GM23248 (cell line): ENCODE measurements at regions of chr3 and their contacts with region 1.

Region 1: DNA sequence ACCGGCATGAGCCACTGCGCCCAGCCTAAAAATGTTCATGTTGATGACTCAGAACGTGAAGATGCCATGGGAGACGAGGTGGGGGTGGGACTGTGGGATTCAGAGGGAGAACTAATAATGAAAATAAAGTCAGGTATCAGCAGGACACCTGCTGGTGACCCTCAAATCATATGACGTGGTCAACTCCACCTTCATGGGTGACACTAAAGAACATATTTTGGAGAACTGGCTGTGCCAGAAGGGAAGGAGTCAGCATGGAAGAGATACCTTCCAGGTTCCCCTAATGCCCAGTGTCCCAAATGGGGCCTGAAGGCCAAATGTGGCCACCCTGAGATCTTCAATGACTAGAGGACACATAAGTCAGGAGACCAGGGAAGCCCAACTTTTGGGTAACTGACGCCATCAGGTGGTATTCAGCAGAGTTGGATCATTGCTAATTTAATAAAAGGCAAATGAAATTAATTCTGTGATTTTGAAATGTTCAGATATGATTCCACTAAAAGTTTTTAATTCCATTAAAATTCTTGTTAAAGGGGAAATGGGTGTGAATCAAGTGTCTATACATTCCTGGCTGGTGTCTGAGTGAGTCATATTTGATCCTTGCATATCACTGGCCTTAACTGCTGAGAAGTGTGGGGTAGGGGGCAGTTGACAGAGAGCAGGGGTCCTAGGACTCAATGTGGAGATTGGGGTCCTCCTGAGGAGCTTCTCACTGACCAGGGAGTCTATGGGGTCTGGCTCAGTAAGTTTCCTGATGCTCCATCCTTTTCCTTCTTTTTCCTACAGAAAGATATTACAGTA is 88.7 kb upstream of the GSK3B start:
- DNase-seq: peak; percentile 77
- H3K4me3 ChIP-seq: no peak overlapping the region
- H3K27ac ChIP-seq: no peak overlapping the region
- H3K4me1 ChIP-seq: peaks cover 14% of the 10 kb centered on the region
- H3K27me3 ChIP-seq: no peaks in the 10 kb centered on the region

Region 2: GRCh38 chr3:119769394-119770149 is 413.4 kb before region 1 on chr3:
- in situ Hi-C with region 1: no loop called
- DNase-seq: peak; percentile 22
- H3K4me3 ChIP-seq: no peak overlapping the region
- H3K27ac ChIP-seq: no peak overlapping the region
- H3K4me1 ChIP-seq: no peaks in the 10 kb centered on the region
- H3K27me3 ChIP-seq: peaks cover 27% of the 10 kb centered on the region; the same call in 1 of the 2 replicates

Region 3: GRCh38 chr3:119891944-119892721 is 290.8 kb before region 1 on chr3:
- in situ Hi-C with region 1: loop called (anchors 10 kb)
- DNase-seq: peak; percentile 83
- H3K4me3 ChIP-seq: 0 out of 2 replicates have a peak overlapping the region, but pooled peaks have one; percentile 18
- H3K27ac ChIP-seq: no peak overlapping the region
- H3K4me1 ChIP-seq: no peaks in the 10 kb centered on the region
- H3K27me3 ChIP-seq: no peaks in the 10 kb centered on the region

Region 4: GRCh38 chr3:119998166-119998565 is 184.8 kb before region 1 on chr3:
- in situ Hi-C with region 1: no loop called
- DNase-seq: no peak
- H3K4me3 ChIP-seq: no peak overlapping the region
- H3K27ac ChIP-seq: no peak overlapping the region
- H3K4me1 ChIP-seq: no peaks in the 10 kb centered on the region
- H3K27me3 ChIP-seq: no peaks in the 10 kb centered on the region